Activated CD4-positive, alpha-beta memory T cell treated with anti-CD3 and anti-CD28 coated beads, Interleukin-2, amount 10 ng/mL, durations not matched to agents 7 days and 5 days (primary cell): ENCODE measurements at regions of chr3 and their contacts with region 1.

Region 1: GRCh38 chr3:190205739-190206138 is 85.0 kb upstream of the P3H2 start:
- DNase-seq: no peak
- H3K4me3 Mint-ChIP-seq: no peak overlapping the region
- H3K27ac Mint-ChIP-seq: no peak overlapping the region
- H3K4me1 Mint-ChIP-seq: peaks cover 10% of the 10 kb centered on the region
- H3K27me3 Mint-ChIP-seq: peaks cover 3% of the 10 kb centered on the region

Region 2: GRCh38 chr3:189967254-189967865 is 238.4 kb before region 1 on chr3:
- CTCF ChIA-PET with region 1: interaction called, 15 read pairs
- POLR2A ChIA-PET with region 1: no interaction called
- DNase-seq: no peak
- H3K4me3 Mint-ChIP-seq: no peak overlapping the region
- H3K27ac Mint-ChIP-seq: no peak overlapping the region
- H3K4me1 Mint-ChIP-seq: peaks cover 3% of the 10 kb centered on the region
- H3K27me3 Mint-ChIP-seq: peaks cover 9% of the 10 kb centered on the region